ENCODE measurements at regions of chr1 and their contacts with region 1.

Region 1: DNA sequence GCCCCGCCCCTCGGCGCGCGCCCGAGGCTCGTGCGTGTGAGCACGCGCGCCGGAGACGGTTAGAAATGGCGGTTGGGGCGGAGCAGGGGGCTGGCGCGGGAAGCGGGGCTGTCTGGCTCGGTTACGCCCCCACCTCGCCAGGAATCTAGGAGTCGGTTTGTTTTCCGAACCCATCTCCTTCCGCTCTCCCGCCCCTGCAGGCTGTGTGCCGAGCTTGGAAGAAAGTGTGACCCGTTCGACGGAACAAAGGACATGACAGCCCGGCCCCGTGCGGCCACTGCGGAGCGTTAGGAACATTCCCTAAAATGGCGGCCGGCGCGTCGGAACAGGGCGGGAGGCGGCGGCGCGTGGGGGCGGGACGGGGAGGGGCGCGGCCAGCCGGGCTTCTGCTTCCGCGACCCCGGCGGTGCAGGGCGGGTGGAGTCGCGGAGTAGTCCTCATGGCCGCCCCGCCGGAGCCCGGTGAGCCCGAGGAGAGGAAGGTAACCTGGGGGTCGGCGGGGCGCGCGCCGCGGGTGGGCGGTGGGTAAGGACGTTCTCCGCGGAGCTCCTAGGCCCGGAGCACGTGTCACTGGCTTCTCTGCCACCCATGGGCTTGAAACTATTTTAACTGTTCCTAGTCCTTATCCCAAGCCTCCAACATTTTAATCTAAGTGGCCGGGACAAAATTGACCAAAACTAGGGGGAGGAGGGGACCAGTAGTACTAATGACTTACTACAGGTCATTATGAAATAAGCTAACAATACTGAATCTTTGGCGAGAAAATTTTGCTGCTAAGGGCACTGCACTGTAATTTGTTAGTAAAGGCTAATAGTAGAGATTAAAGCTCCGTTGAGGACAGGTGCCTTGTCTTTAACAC is at the start of gene COX20:
- DNase-seq: peak; percentile 80 to 98 (median 90)
- ATAC-seq: peak; percentile 63
- H3K4me3 Mint-ChIP-seq: peak within 1 kb of the TSS; percentile 93 to 99 (median 96)
- H3K27ac Mint-ChIP-seq: peak within 1 kb of the TSS; percentile 97 to 100 (median 100)
- H3K4me1 Mint-ChIP-seq: peaks cover 24 to 59% (median 49%) of the 10 kb centered on the region in 4 donors
- H3K27me3 Mint-ChIP-seq: no peaks in the 10 kb centered on the region
- polyA plus RNA-seq, gene COX20: 31.4 to 52.6 (median 49.3) TPM

Region 2: DNA sequence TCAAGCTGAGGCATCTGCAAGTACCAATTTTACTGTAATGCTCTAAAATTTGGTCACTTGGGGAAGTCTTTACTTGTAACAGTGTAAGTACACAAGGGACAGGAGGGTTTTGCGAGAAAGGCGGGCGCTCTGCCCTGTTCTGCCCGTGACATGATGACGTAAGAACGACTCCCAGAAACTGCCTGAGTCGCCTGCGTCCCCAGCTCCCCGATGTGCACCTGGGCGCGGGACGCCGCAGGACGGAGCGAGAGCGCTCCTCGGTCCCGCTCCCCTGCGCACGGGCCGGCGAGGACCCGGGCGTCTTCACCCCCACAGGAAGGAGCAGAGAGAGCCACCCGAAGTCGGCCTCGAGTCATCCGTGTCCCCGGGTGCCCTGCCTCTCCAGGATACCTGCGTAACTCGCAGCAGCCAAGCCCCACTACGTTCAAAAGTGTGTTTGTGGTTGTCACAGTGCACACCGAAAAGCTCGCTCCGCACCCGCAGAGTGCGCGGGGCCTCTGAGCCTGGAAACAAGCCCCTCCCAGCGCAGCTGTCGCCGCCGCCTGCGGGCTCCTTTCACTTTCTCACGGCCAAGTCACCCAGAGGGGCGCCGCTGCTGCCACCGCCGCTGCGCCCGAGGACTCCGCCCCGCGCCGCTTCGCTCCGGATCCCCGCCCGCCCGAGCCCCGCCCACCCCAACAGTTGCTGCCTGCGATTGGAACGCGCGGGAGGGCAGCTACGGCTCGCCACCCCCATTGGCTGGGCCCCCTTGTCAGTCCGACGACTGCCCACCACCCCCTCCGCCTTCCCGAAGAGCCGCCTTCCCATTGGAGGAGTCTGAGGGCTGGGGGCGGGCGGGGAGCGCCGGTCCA is 787.7 kb before region 1 on chr1:
- POLR2A ChIA-PET with region 1: interaction called, 11 read pairs
- DNase-seq: peak; percentile 94 to 100 (median 97)
- ATAC-seq: peak; percentile 76 to 78
- H3K4me3 Mint-ChIP-seq: peak overlapping the region; percentile 85 to 98 (median 94)
- H3K27ac Mint-ChIP-seq: peak overlapping the region; percentile 96 to 100 (median 98)
- H3K4me1 Mint-ChIP-seq: peaks cover 7 to 39% (median 19%) of the 10 kb centered on the region in 4 donors
- H3K27me3 Mint-ChIP-seq: peaks cover 0 to 1% (median 0%) of the 10 kb centered on the region in 5 donors

Region 3: GRCh38 chr1:244451951-244452795 is 383.3 kb before region 1 on chr1:
- POLR2A ChIA-PET with region 1: interaction called, 17 read pairs
- DNase-seq: peak; percentile 92 to 99 (median 98)
- ATAC-seq: peak; percentile 82 to 88
- H3K4me3 Mint-ChIP-seq: peak overlapping the region; percentile 81 to 99 (median 92)
- H3K27ac Mint-ChIP-seq: peak overlapping the region; percentile 93 to 99 (median 97)
- H3K4me1 Mint-ChIP-seq: peaks cover 22 to 41% (median 38%) of the 10 kb centered on the region in 4 donors
- H3K27me3 Mint-ChIP-seq: no peaks in the 10 kb centered on the region

Region 4: GRCh38 chr1:244652699-244653466 is 182.6 kb before region 1 on chr1 and contains the start of gene DESI2:
- POLR2A ChIA-PET with region 1: interaction called, 29 read pairs
- DNase-seq: peak; percentile 90 to 100 (median 98)
- ATAC-seq: peak; percentile 91 to 92
- H3K4me3 Mint-ChIP-seq: peak within 1 kb of the TSS in 7 of 10 donors; percentile 79 to 91 (median 88)
- H3K27ac Mint-ChIP-seq: peak within 1 kb of the TSS; percentile 63 to 95 (median 92)
- H3K4me1 Mint-ChIP-seq: peaks cover 15 to 23% (median 18%) of the 10 kb centered on the region in 4 donors
- H3K27me3 Mint-ChIP-seq: no peaks in the 10 kb centered on the region
- polyA plus RNA-seq, gene DESI2: 10.8 to 13.1 (median 12.9) TPM

Region 5: DNA sequence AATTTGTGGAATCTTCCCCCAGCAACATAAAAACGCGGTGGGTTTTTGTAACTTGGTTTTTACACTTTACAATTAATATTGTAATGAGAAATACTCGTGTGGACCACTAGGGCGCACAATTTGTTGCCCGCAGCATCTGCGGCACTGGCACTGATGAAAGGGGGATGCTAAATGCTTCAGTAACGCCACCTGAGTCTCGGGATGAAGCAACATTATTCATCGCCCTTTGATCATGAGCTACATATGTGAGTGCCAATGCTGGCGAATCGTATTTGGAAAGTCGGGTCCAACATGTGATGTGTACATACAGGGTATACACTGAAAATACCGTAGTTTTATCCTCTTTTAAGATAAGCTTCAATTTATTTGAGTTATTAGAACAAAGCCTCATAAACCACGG is 34.3 kb before region 1 on chr1:
- POLR2A ChIA-PET with region 1: interaction called, 10 read pairs
- DNase-seq: peak; percentile 23 to 79 (median 56)
- ATAC-seq: peak; percentile 92 to 98
- H3K4me3 Mint-ChIP-seq: peak overlapping the region in 2 of 10 donors; percentile 3 to 21
- H3K27ac Mint-ChIP-seq: peak overlapping the region in 4 of 10 donors; percentile 26 to 67 (median 56)
- H3K4me1 Mint-ChIP-seq: peaks cover 0 to 5% (median 2%) of the 10 kb centered on the region in 4 donors
- H3K27me3 Mint-ChIP-seq: peaks cover 0 to 3% (median 0%) of the 10 kb centered on the region in 5 donors

Region 6: GRCh38 chr1:244918421-244919319 is 83.2 kb after region 1 on chr1:
- POLR2A ChIA-PET with region 1: interaction called, 33 read pairs
- DNase-seq: peak; percentile 46 to 87 (median 79)
- ATAC-seq: peak; percentile 97
- H3K4me3 Mint-ChIP-seq: peak overlapping the region; percentile 85 to 98 (median 92)
- H3K27ac Mint-ChIP-seq: peak overlapping the region; percentile 58 to 97 (median 90)
- H3K4me1 Mint-ChIP-seq: peaks cover 1 to 20% (median 9%) of the 10 kb centered on the region in 4 donors
- H3K27me3 Mint-ChIP-seq: peaks cover 0 to 1% (median 0%) of the 10 kb centered on the region in 5 donors

Region 7: GRCh38 chr1:244970661-244971551 is 135.4 kb after region 1 on chr1:
- POLR2A ChIA-PET with region 1: interaction called, 247 read pairs
- DNase-seq: peak; percentile 90 to 99 (median 94)
- ATAC-seq: peak; percentile 71 to 73
- H3K4me3 Mint-ChIP-seq: peak overlapping the region; percentile 89 to 98 (median 94)
- H3K27ac Mint-ChIP-seq: peak overlapping the region; percentile 99 to 100 (median 99)
- H3K4me1 Mint-ChIP-seq: peaks cover 6 to 26% (median 21%) of the 10 kb centered on the region in 4 donors
- H3K27me3 Mint-ChIP-seq: no peaks in the 10 kb centered on the region

Region 8: GRCh38 chr1:245000872-245001188 is 165.3 kb after region 1 on chr1:
- POLR2A ChIA-PET with region 1: no interaction called
- DNase-seq: no peak
- ATAC-seq: no peak
- H3K4me3 Mint-ChIP-seq: no peak overlapping the region
- H3K27ac Mint-ChIP-seq: peak overlapping the region in 2 of 10 donors; percentile 20 to 45
- H3K4me1 Mint-ChIP-seq: peaks cover 0 to 4% (median under 1%) of the 10 kb centered on the region in 4 donors
- H3K27me3 Mint-ChIP-seq: peaks cover 0 to 4% (median 0%) of the 10 kb centered on the region in 5 donors

Measured in naive thymus-derived CD8-positive, alpha-beta T cell (primary cell).